ENCODE measurements at regions of chr6 and their contacts with region 1.

Region 1: GRCh38 chr6:8803181-8803760 is 367.9 kb upstream of the SLC35B3 start:
- DNase-seq: no peak
- ATAC-seq: no peak
- H3K4me3 ChIP-seq: no peak overlapping the region
- H3K4me3 Mint-ChIP-seq: no peak overlapping the region
- H3K27ac ChIP-seq: no peak overlapping the region
- H3K27ac Mint-ChIP-seq: no peak overlapping the region
- H3K4me1 ChIP-seq: no peaks in the 10 kb centered on the region
- H3K4me1 Mint-ChIP-seq: no peaks in the 10 kb centered on the region
- H3K27me3 ChIP-seq: no peaks in the 10 kb centered on the region
- H3K27me3 Mint-ChIP-seq: no peaks in the 10 kb centered on the region

Region 2: DNA sequence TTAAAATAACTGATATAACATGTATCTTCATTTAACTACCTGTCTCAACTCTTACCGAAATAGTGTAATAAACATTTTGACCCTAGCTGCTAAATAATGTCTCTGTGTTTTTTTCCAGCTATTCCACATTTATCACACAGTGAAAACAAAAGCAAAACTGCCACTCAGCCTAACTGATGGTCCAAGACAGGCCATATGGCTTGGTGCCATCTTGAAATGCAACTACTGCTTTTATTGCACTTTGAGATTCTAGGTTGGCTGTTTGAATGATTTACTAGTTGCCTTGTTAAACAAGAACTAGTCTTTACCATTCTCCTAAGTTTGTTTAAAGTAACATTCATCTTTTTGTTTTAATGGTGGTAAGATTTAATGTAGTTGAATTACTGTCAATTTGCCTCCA is 871.9 kb after region 1 on chr6:
- CTCF ChIA-PET with region 1: interaction called in 1 of 2 experiments, 10 read pairs
- POLR2A ChIA-PET with region 1: no interaction called
- DNase-seq: no peak
- ATAC-seq: no peak
- H3K4me3 ChIP-seq: no peak overlapping the region
- H3K4me3 Mint-ChIP-seq: no peak overlapping the region
- H3K27ac ChIP-seq: no peak overlapping the region
- H3K27ac Mint-ChIP-seq: no peak overlapping the region
- H3K4me1 ChIP-seq: no peaks in the 10 kb centered on the region
- H3K4me1 Mint-ChIP-seq: no peaks in the 10 kb centered on the region
- H3K27me3 ChIP-seq: no peaks in the 10 kb centered on the region
- H3K27me3 Mint-ChIP-seq: no peaks in the 10 kb centered on the region